Activated naive CD4-positive, alpha-beta T cell treated with anti-CD3 and anti-CD28 coated beads for 36 hours (primary cell): ENCODE measurements at regions of chr6 and their contacts with region 1.

Region 1: GRCh38 chr6:96626759-96627364 is 63.9 kb downstream of the FHL5 start:
- DNase-seq: no peak
- H3K4me3 Mint-ChIP-seq: no peak overlapping the region
- H3K27ac Mint-ChIP-seq: no peak overlapping the region
- H3K4me1 Mint-ChIP-seq: no peaks in the 10 kb centered on the region
- H3K27me3 Mint-ChIP-seq: peaks cover 4% of the 10 kb centered on the region

Region 2: DNA sequence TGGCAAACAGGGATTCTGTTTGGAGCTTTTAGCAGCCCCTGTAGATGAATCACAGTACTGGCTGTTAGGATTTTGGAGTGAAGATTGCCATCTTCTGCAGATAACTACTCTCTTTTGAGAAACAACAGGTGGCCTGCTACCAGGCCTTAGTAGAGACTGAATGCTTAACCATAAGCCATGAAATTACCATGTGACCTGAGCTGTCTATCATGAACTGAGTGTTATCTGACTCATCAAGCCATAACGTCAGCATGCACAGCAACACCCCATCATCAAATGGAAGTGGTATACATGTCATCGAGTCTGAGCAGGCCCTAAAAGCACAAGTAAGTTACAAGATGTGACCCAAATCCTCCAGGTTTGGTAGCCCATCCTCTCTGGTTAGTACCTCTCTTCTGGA is 77.9 kb after region 1 on chr6:
- CTCF ChIA-PET with region 1: no interaction called
- intact Hi-C with region 1: no loop called
- DNase-seq: no peak
- H3K4me3 Mint-ChIP-seq: no peak overlapping the region
- H3K27ac Mint-ChIP-seq: no peak overlapping the region
- H3K4me1 Mint-ChIP-seq: no peaks in the 10 kb centered on the region
- H3K27me3 Mint-ChIP-seq: peaks cover 5% of the 10 kb centered on the region

Region 3: DNA sequence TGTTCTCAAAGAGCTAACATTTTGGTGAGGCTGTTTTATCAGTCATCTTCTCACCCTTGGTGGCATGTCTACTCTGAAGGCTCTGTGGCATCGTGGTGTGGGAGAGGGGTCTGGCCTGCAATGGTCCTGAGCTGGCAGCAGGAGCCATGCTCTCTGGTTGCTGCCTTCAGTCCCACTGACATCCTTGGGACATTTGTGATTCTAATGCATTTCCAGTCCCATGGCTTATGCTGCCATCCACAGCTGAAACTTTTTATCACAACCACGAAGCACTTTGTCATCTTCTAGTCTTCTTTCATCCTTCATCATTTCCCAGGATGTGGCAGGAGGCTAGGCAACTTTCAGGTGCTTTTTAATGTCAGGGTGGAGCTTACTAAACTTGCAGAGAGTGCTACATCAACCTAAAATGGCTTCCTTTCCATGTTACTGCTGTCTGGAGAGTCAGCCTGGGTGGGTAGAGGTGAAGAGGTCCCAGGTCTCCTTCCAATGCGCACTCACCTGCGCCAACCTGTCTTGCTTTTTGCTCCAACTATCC is 133.4 kb after region 1 on chr6:
- CTCF ChIA-PET with region 1: interaction called, 3 read pairs
- intact Hi-C with region 1: loop called (anchors 1 kb)
- DNase-seq: peak; percentile 9
- H3K4me3 Mint-ChIP-seq: no peak overlapping the region
- H3K27ac Mint-ChIP-seq: no peak overlapping the region
- H3K4me1 Mint-ChIP-seq: peaks cover 4% of the 10 kb centered on the region
- H3K27me3 Mint-ChIP-seq: peaks cover 4% of the 10 kb centered on the region